Gastrocnemius medialis (tissue), 4 donors: ENCODE measurements at regions of chr22 and their contacts with region 1.

Region 1: DNA sequence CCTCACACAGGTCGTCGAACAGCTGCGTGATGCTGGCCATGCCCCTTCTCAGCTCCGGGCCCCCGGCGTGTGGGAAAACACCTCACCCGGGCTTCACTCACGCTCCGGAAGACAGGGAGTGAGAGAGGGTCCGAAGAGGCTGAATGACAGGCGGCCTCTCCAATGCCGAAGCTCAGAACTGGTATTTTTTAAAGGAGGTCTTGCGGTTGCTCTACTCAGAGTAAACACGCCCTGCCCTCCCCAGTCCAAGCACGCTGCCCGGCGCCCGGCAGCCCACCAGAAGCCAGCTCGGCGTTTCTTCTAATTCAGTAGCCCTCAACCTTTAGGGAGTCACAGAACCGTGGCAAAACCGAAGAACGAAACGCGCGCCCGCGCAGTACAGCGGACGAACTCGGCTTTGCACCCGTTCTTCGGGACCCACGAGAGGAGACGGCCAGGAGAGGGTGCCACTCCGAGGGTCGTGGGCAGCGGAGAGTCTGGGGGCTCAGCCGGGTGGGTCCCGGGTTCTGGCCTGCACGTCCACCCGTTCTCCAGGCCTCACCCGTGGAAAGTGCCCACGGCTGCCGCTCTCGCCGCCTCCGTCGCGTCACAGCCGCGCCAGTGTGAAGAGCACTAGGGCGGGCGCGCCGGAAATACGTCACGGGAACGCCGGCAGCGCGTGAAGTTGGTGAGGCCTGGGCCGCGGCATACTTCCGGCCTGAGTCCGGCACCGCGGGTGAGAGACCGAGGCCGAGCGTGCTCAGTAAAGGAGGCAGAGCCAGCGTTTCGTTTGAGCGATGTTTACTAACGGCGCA is at the start of gene TUBGCP6:
- DNase-seq: peak; percentile 84 to 90
- ATAC-seq: peak; percentile 79 to 80
- H3K4me3 ChIP-seq: peak within 1 kb of the TSS; percentile 74 to 98 (median 81)
- H3K27ac ChIP-seq: peak within 1 kb of the TSS; percentile 88 to 98 (median 90)
- H3K4me1 ChIP-seq: peaks cover 43 to 46% of the 10 kb centered on the region in 2 donors
- H3K27me3 ChIP-seq: no peaks in the 10 kb centered on the region
- CTCF ChIP-seq: peak; percentile 24 to 43 (median 37)
- POLR2A ChIP-seq: peak; percentile 70 to 81
- total RNA-seq, gene TUBGCP6: 18.7 to 27.4 (median 19.2) TPM

Region 2: DNA sequence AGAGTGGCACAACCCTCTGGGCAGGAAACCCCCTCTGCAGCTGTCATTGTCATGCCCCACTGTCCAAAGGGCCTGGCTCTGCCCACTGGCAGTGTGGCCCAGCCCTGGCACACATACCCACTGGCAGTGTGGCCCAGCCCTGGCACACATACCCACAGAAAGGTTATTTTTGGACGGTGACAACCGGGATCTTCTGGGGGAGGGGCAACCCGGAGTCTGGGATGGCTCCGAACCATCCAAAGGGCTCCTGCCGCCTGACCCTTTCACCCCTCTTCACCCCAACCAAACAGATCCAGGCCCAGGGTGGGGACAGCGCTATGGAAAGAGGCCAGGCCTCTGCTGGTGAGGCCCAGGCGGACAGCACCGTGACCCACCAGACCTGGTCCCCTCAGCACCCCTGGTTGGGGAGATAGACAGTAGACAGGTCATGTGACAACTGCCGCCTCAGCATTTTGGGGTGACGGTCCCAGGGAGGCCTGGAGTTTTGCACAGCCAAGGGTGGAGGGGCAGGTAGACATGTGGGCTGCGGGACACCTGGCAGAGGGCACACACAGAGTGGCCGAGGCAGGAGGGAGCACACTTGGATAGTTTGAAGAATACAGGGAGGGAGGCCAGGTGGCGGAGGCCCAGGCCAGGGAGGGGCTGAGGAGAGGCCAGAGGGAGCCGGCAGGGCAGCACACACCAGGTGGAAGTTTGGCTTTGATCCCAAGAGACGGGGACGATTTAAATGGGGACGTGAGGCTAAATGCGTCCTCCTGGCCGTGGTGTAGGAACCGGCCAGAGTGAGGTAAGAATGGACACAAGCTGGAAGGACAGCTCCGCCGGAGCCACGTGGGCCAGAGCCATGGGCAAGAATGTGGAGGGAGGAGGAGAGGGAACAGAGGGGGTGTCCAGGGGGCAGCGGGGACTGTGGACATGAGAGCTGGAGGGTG is 14.0 kb after region 1 on chr22:
- in situ Hi-C with region 1: no loop called
- intact Hi-C with region 1: loop called (anchors 1 kb)
- DNase-seq: peak; percentile 92 to 98
- ATAC-seq: peak; percentile 50 to 61
- H3K4me3 ChIP-seq: peak overlapping the region; percentile 34 to 77 (median 52)
- H3K27ac ChIP-seq: peak overlapping the region; percentile 93 to 99 (median 98)
- H3K4me1 ChIP-seq: peaks cover 40 to 63% of the 10 kb centered on the region in 2 donors
- H3K27me3 ChIP-seq: no peaks in the 10 kb centered on the region
- CTCF ChIP-seq: no peak
- POLR2A ChIP-seq: peak; percentile 40 to 73

Region 3: GRCh38 chr22:50276143-50276542 is 31.5 kb after region 1 on chr22:
- in situ Hi-C with region 1: no loop called
- intact Hi-C with region 1: loop called (anchors 2 kb)
- DNase-seq: no peak
- ATAC-seq: peak; percentile 6 to 40
- H3K4me3 ChIP-seq: no peak overlapping the region
- H3K27ac ChIP-seq: no peak overlapping the region
- H3K4me1 ChIP-seq: peaks cover 4 to 12% of the 10 kb centered on the region in 2 donors
- H3K27me3 ChIP-seq: peaks cover 2 to 7% (median 4%) of the 10 kb centered on the region in 3 donors
- CTCF ChIP-seq: peak in 2 of 5 experiments; percentile 28 to 46
- POLR2A ChIP-seq: no peak